ENCODE measurements at regions of chr1 and their contacts with region 1.

Region 1: GRCh38 chr1:205141236-205142101 is 19.7 kb upstream of the RBBP5 start:
- DNase-seq: peak; percentile 56 to 86 (median 67)
- ATAC-seq: peak; percentile 95
- H3K4me3 ChIP-seq: no peak overlapping the region
- H3K4me3 Mint-ChIP-seq: no peak overlapping the region
- H3K27ac ChIP-seq: no peak overlapping the region
- H3K27ac Mint-ChIP-seq: peak overlapping the region; percentile 18
- H3K4me1 ChIP-seq: peaks cover 8% of the 10 kb centered on the region
- H3K4me1 Mint-ChIP-seq: peaks cover 10% of the 10 kb centered on the region
- H3K27me3 ChIP-seq: no peaks in the 10 kb centered on the region
- H3K27me3 Mint-ChIP-seq: no peaks in the 10 kb centered on the region
- CTCF ChIP-seq: peak; percentile 83

Region 2: GRCh38 chr1:204989266-204990058 is 152.0 kb before region 1 on chr1:
- CTCF ChIA-PET with region 1: no interaction called
- POLR2A ChIA-PET with region 1: no interaction called
- intact Hi-C with region 1: loop called (anchors 2 kb)
- DNase-seq: peak; percentile 7 to 71 (median 38)
- ATAC-seq: peak; percentile 77
- H3K4me3 ChIP-seq: no peak overlapping the region
- H3K4me3 Mint-ChIP-seq: no peak overlapping the region
- H3K27ac ChIP-seq: no peak overlapping the region
- H3K27ac Mint-ChIP-seq: no peak overlapping the region
- H3K4me1 ChIP-seq: peaks cover 11% of the 10 kb centered on the region
- H3K4me1 Mint-ChIP-seq: peaks cover 16% of the 10 kb centered on the region
- H3K27me3 ChIP-seq: peaks cover 0 to 2% of the 10 kb centered on the region in 2 experiments
- H3K27me3 Mint-ChIP-seq: no peaks in the 10 kb centered on the region
- CTCF ChIP-seq: peak; percentile 54

Measured in CD4-positive, alpha-beta T cell (primary cell).